ENCODE measurements at regions of chr1 and their contacts with region 1.

Region 1: GRCh38 chr1:32773018-32773763 is 44.0 kb downstream of the YARS1 start:
- DNase-seq: peak; percentile 20
- ATAC-seq: peak; percentile 95
- H3K4me3 ChIP-seq: no peak overlapping the region
- H3K27ac ChIP-seq: no peak overlapping the region
- H3K4me1 ChIP-seq: no peaks in the 10 kb centered on the region
- H3K27me3 ChIP-seq: no peaks in the 10 kb centered on the region
- CTCF ChIP-seq: peak; percentile 93 to 97 (median 96); a peak in 5 of 6 replicates
- EP300 ChIP-seq: no peak
- POLR2A ChIP-seq: peak; percentile 8; the same call in 1 of the 2 replicates
- RAD21 ChIP-seq: peak; percentile 85

Region 2: GRCh38 chr1:32448773-32449456 is 324.3 kb before region 1 on chr1:
- CTCF ChIA-PET with region 1: interaction called, 4 read pairs
- POLR2A ChIA-PET with region 1: no interaction called
- RAD21 ChIA-PET with region 1: no interaction called
- SMC1A ChIA-PET with region 1: interaction called, 3 read pairs
- in situ Hi-C with region 1: no loop called
- intact Hi-C with region 1: loop called (anchors 1 kb)
- DNase-seq: no peak
- ATAC-seq: peak; percentile 48; the same call in 1 of the 3 replicates
- H3K4me3 ChIP-seq: no peak overlapping the region
- H3K27ac ChIP-seq: no peak overlapping the region
- H3K4me1 ChIP-seq: no peaks in the 10 kb centered on the region
- H3K27me3 ChIP-seq: no peaks in the 10 kb centered on the region
- CTCF ChIP-seq: peak in 2 of 3 experiments; percentile 1 to 23; a peak in 2 of 6 replicates
- EP300 ChIP-seq: no peak
- POLR2A ChIP-seq: no peak
- RAD21 ChIP-seq: no peak

Region 3: DNA sequence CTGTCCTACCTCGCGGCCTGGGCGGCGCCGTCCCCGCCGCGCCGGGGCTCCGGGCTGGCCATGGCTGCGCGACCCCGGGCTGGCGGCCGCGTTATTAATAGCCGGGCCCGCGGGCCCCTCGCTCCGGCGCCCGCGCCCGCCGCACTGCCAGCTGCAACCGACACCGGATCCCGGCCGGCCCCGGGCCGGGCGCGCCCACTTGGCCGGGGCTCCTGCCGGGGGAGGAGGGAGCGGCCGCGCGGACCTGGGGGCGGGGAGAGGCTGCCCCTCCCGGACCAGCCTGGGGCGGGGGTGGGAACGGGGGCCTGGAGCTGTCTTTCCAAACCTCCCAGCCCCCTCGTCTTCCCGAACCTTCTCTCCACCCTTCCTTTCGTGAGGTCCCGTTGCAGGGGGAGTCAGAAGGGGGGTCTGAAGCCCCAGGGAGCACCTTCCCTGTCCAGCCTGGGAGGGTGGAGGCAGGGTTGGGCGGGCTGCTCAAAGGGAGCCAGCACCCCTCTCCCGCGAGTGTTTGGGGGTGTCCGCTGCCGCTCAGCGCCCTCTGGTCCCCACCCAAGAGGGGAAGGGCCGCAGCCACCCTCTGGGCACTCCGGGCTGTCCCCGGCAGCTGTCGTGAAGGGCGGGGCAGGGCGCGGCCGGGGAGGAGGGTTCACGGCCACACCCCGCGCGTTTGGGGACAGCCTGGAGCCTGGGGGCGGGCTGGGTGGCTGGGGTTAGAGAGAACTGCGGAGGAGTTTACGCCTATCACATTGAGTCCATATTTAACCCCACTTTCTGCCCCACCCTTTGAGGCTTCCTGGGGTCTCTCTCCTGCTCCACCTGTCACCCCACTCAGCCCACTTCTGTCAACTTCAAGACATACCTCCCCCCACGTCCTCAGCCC is 70.4 kb before region 1 on chr1 and contains the start of gene SYNC:
- CTCF ChIA-PET with region 1: interaction called, 15 read pairs
- POLR2A ChIA-PET with region 1: no interaction called
- RAD21 ChIA-PET with region 1: no interaction called
- SMC1A ChIA-PET with region 1: interaction called, 3 read pairs
- in situ Hi-C with region 1: no loop called
- intact Hi-C with region 1: no loop called
- DNase-seq: no peak
- ATAC-seq: peak; percentile 75
- H3K4me3 ChIP-seq: peak within 1 kb of the TSS; percentile 11; the same call in 1 of the 2 replicates
- H3K27ac ChIP-seq: no peak within 1 kb of the TSS
- H3K4me1 ChIP-seq: no peaks in the 10 kb centered on the region
- H3K27me3 ChIP-seq: peaks cover 6 to 13% of the 10 kb centered on the region in 2 experiments; a peak in 3 of 4 replicates
- CTCF ChIP-seq: no peak
- EP300 ChIP-seq: no peak
- POLR2A ChIP-seq: no peak
- RAD21 ChIP-seq: no peak
- polyA plus RNA-seq, gene SYNC: not detected

Region 4: DNA sequence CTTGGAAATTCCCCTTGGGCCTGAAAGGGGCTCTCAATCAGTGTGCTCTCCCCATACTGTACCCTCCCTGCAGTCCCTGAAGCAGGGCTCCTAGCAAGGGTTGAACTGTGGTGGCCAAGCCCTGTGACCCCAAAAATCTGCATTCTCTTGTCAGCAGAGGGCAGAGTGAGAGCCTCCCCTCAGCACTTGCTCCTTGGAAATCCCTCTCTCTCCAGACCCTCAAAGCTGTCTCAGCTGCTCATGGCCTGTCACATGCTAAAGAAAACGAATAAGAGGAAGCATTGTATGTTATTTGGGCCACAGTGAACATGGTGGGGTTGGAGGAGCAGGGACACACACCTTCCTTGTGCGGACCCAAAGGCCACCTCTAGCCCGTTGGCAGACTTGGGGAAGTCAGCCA is 23.4 kb before region 1 on chr1:
- CTCF ChIA-PET with region 1: interaction called, 15 read pairs
- POLR2A ChIA-PET with region 1: no interaction called
- RAD21 ChIA-PET with region 1: interaction called, 6 read pairs
- SMC1A ChIA-PET with region 1: interaction called, 4 read pairs
- in situ Hi-C with region 1: no loop called
- intact Hi-C with region 1: no loop called
- DNase-seq: no peak
- ATAC-seq: peak; percentile 17; the same call in 2 of the 3 replicates
- H3K4me3 ChIP-seq: no peak overlapping the region
- H3K27ac ChIP-seq: no peak overlapping the region
- H3K4me1 ChIP-seq: peaks cover 7% of the 10 kb centered on the region
- H3K27me3 ChIP-seq: no peaks in the 10 kb centered on the region; a peak in 1 of 4 replicates
- CTCF ChIP-seq: peak in 1 of 3 experiments; percentile 17; a peak in 1 of 6 replicates
- EP300 ChIP-seq: no peak
- POLR2A ChIP-seq: no peak
- RAD21 ChIP-seq: no peak

Region 5: DNA sequence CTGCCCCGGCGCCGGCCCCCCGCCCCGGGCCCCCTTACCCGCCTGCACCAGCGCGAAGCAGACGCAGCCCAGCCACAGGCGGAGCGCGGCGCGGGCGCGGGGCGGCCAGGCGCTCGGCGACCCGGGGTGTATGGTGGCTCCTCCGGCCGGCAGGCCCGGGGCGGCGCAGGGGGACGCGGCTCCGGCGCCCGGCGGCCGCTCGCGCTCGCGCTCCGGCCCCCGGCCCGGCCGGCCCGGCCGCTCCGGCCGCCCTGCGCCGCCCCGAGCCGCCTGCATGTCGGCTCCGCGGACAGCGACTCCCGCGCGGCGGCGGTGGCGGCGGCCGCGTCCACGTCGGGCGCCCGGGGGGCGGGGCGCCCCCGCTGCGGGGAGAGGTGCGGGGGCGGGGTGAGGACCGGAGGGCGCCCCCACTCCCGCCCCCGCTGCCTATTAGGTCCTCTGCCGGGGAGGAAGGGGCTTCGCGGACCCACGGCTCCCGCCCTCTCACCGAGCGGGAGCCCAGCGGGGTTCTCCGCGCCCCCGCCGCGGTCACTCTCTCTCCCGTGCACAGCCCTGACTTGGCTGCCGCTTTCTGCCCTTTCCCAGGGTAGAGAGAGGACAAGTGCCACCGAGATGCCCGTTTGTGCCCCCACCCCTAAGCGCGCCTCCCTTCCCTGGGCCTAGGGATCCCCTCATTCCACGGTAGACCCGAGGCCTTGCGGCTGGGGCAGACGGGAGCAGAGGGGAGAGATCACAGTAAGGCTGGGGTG is 97.6 kb after region 1 on chr1 and contains the start of gene FNDC5:
- CTCF ChIA-PET with region 1: interaction called, 15 read pairs
- POLR2A ChIA-PET with region 1: interaction called, 3 read pairs
- RAD21 ChIA-PET with region 1: interaction called, 7 read pairs
- SMC1A ChIA-PET with region 1: interaction called, 5 read pairs
- in situ Hi-C with region 1: no loop called
- intact Hi-C with region 1: no loop called
- DNase-seq: no peak
- ATAC-seq: peak; percentile 21; the same call in 1 of the 3 replicates
- H3K4me3 ChIP-seq: no peak within 1 kb of the TSS
- H3K27ac ChIP-seq: no peak within 1 kb of the TSS
- H3K4me1 ChIP-seq: peaks cover 4% of the 10 kb centered on the region
- H3K27me3 ChIP-seq: peaks cover 9 to 12% of the 10 kb centered on the region in 2 experiments; a peak in 3 of 4 replicates
- CTCF ChIP-seq: no peak
- EP300 ChIP-seq: no peak
- POLR2A ChIP-seq: no peak
- RAD21 ChIP-seq: no peak
- polyA plus RNA-seq, gene FNDC5: 0.14 to 0.26 TPM

Region 6: GRCh38 chr1:32881871-32882850 is 109.0 kb after region 1 on chr1:
- CTCF ChIA-PET with region 1: no interaction called
- POLR2A ChIA-PET with region 1: no interaction called
- RAD21 ChIA-PET with region 1: no interaction called
- SMC1A ChIA-PET with region 1: no interaction called
- in situ Hi-C with region 1: no loop called
- intact Hi-C with region 1: no loop called
- DNase-seq: no peak
- ATAC-seq: no peak
- H3K4me3 ChIP-seq: no peak overlapping the region
- H3K27ac ChIP-seq: no peak overlapping the region
- H3K4me1 ChIP-seq: no peaks in the 10 kb centered on the region
- H3K27me3 ChIP-seq: peaks cover 3 to 5% of the 10 kb centered on the region in 2 experiments; a peak in 3 of 4 replicates
- CTCF ChIP-seq: no peak
- EP300 ChIP-seq: no peak
- POLR2A ChIP-seq: no peak
- RAD21 ChIP-seq: no peak